ENCODE measurements at regions of chr14 and their contacts with region 1.

Region 1: GRCh38 chr14:92039719-92040430 is at the start of gene TRIP11:
- DNase-seq: peak; percentile 94 to 97
- ATAC-seq: peak; percentile 88 to 98 (median 94)
- H3K4me3 ChIP-seq: peak within 1 kb of the TSS; percentile 62
- H3K4me3 Mint-ChIP-seq: peak within 1 kb of the TSS; percentile 95
- H3K27ac ChIP-seq: peak within 1 kb of the TSS; percentile 84
- H3K27ac Mint-ChIP-seq: peak within 1 kb of the TSS; percentile 98
- H3K4me1 ChIP-seq: peaks cover 11% of the 10 kb centered on the region
- H3K4me1 Mint-ChIP-seq: peaks cover 45 to 48% of the 10 kb centered on the region in 2 donors
- H3K27me3 ChIP-seq: no peaks in the 10 kb centered on the region
- H3K27me3 Mint-ChIP-seq: no peaks in the 10 kb centered on the region
- CTCF ChIP-seq: no peak
- total RNA-seq, gene TRIP11: 42.9 to 63.6 (median 49.8) TPM

Region 2: DNA sequence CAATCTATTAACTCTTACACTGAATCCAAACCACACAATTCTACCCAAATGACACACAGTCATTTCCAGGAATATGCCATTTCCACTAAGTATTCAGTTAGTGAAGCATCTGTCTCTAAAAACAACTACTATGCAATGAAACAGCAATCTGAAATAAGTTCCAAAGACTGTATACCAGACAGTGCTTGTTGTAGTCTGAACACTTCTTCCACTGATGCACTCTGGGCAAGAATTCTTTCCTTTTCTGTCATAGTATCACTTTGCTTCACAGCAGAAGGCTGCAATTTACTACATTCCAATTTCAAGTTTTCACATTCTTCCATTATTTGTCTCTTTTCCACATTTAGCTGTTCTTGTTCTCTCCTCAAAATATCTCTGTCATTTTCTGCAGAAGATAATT is 25.8 kb before region 1 on chr14:
- intact Hi-C with region 1: no loop called
- DNase-seq: no peak
- ATAC-seq: no peak
- H3K4me3 ChIP-seq: no peak overlapping the region
- H3K4me3 Mint-ChIP-seq: no peak overlapping the region
- H3K27ac ChIP-seq: no peak overlapping the region
- H3K27ac Mint-ChIP-seq: no peak overlapping the region
- H3K4me1 ChIP-seq: no peaks in the 10 kb centered on the region
- H3K4me1 Mint-ChIP-seq: peaks cover 5 to 7% of the 10 kb centered on the region in 2 donors
- H3K27me3 ChIP-seq: no peaks in the 10 kb centered on the region
- H3K27me3 Mint-ChIP-seq: no peaks in the 10 kb centered on the region
- CTCF ChIP-seq: no peak

Region 3: DNA sequence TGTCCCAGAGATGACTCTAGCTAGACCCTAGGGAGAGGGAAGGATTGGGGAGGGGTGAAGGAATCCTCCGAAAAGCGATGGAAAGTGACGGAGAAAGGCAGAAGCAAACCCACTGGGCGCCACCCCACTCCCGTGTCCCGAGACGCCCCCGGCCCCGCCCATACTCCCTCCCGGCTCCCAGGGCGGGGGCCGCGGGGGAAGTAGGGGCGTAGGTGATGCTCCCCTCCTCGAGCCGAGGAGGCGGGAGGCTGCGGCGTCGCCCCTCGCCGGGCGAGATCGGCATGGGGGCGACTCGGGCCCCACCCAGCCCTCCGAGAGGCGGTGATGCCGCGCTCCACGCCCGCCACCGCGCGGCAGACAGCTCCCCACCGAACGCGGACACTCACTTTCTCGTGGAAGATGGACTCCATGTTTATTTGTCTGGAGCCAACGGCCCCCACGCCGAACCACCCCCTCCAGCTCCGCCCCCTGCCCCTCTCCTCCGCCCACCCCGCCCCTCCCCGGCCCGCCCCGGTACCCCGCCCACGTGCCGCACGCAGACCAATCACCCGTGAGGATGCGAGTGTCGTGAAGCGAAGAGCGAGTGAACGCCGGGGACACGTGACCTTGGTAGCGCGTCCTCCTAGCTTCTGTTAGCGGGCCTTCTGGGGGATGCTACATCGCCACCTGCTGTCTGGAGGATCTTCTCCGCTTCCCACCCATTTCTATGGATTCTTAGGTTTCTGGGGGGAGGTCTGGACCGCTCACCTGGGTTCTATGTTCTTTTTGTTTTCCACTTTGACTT is 66.5 kb after region 1 on chr14 and contains the start of gene ATXN3:
- intact Hi-C with region 1: loop called (anchors 1 kb)
- DNase-seq: peak; percentile 86 to 99
- ATAC-seq: peak; percentile 91 to 98 (median 96)
- H3K4me3 ChIP-seq: peak within 1 kb of the TSS; percentile 76
- H3K4me3 Mint-ChIP-seq: peak within 1 kb of the TSS; percentile 99
- H3K27ac ChIP-seq: peak within 1 kb of the TSS; percentile 70
- H3K27ac Mint-ChIP-seq: peak within 1 kb of the TSS; percentile 88 to 91
- H3K4me1 ChIP-seq: peaks cover 17% of the 10 kb centered on the region
- H3K4me1 Mint-ChIP-seq: peaks cover 18 to 22% of the 10 kb centered on the region in 2 donors
- H3K27me3 ChIP-seq: no peaks in the 10 kb centered on the region
- H3K27me3 Mint-ChIP-seq: no peaks in the 10 kb centered on the region
- CTCF ChIP-seq: peak; percentile 74
- total RNA-seq, gene ATXN3: 26.7 to 40.5 (median 30.7) TPM

Region 4: GRCh38 chr14:92121670-92122350 is 81.9 kb after region 1 on chr14 and contains the starts of genes CPSF2 and NDUFB1:
- intact Hi-C with region 1: loop called (anchors 1 kb)
- DNase-seq: peak; percentile 84 to 90
- ATAC-seq: peak; percentile 84 to 93 (median 90)
- H3K4me3 ChIP-seq: peak within 1 kb of the TSS; percentile 94
- H3K4me3 Mint-ChIP-seq: peak within 1 kb of the TSS; percentile 100
- H3K27ac ChIP-seq: peak within 1 kb of the TSS; percentile 94
- H3K27ac Mint-ChIP-seq: peak within 1 kb of the TSS; percentile 97 to 99
- H3K4me1 ChIP-seq: peaks cover 23% of the 10 kb centered on the region
- H3K4me1 Mint-ChIP-seq: peaks cover 31 to 40% of the 10 kb centered on the region in 2 donors
- H3K27me3 ChIP-seq: no peaks in the 10 kb centered on the region
- H3K27me3 Mint-ChIP-seq: no peaks in the 10 kb centered on the region
- CTCF ChIP-seq: no peak
- total RNA-seq, gene CPSF2: 24.2 to 39.8 (median 28.6) TPM
- total RNA-seq, gene NDUFB1: 40.9 to 55.4 (median 45.0) TPM

Region 5: GRCh38 chr14:92793709-92794546 is 754.1 kb after region 1 on chr14 and contains the start of gene GOLGA5:
- intact Hi-C with region 1: loop called (anchors 1 kb)
- DNase-seq: peak; percentile 99
- ATAC-seq: peak; percentile 89 to 98 (median 92)
- H3K4me3 ChIP-seq: peak within 1 kb of the TSS; percentile 99
- H3K4me3 Mint-ChIP-seq: peak within 1 kb of the TSS; percentile 95
- H3K27ac ChIP-seq: peak within 1 kb of the TSS; percentile 86
- H3K27ac Mint-ChIP-seq: peak within 1 kb of the TSS; percentile 77 to 85
- H3K4me1 ChIP-seq: peaks cover 14% of the 10 kb centered on the region
- H3K4me1 Mint-ChIP-seq: peaks cover 32 to 38% of the 10 kb centered on the region in 2 donors
- H3K27me3 ChIP-seq: no peaks in the 10 kb centered on the region
- H3K27me3 Mint-ChIP-seq: peaks cover 3 to 27% of the 10 kb centered on the region in 2 donors
- CTCF ChIP-seq: no peak
- total RNA-seq, gene GOLGA5: 11.5 to 21.0 (median 17.1) TPM